Esophagus muscularis mucosa (tissue), 4 donors: ENCODE measurements at regions of chr2 and their contacts with region 1.

Region 1: GRCh38 chr2:127526149-127527000 is at the start of gene IWS1:
- DNase-seq: peak; percentile 99
- H3K4me3 ChIP-seq: peak within 1 kb of the TSS; percentile 81 to 97 (median 94)
- H3K27ac ChIP-seq: peak within 1 kb of the TSS; percentile 96 to 97 (median 96)
- H3K4me1 ChIP-seq: peaks cover 23 to 37% (median 28%) of the 10 kb centered on the region in 4 donors
- H3K27me3 ChIP-seq: no peaks in the 10 kb centered on the region
- CTCF ChIP-seq: peak in 2 of 3 experiments; percentile 34 to 48
- EP300 ChIP-seq: peak; percentile 73
- POLR2A ChIP-seq: peak; percentile 88
- total RNA-seq, gene IWS1: 32.6 to 38.1 (median 34.7) TPM

Region 2: GRCh38 chr2:127508631-127509034 is 17.7 kb before region 1 on chr2:
- intact Hi-C with region 1: loop called (anchors 2 kb)
- DNase-seq: no peak
- H3K4me3 ChIP-seq: no peak overlapping the region
- H3K27ac ChIP-seq: peak overlapping the region; percentile 24 to 80 (median 68)
- H3K4me1 ChIP-seq: peaks cover 49 to 73% (median 57%) of the 10 kb centered on the region in 4 donors
- H3K27me3 ChIP-seq: no peaks in the 10 kb centered on the region
- CTCF ChIP-seq: no peak
- EP300 ChIP-seq: no peak
- POLR2A ChIP-seq: no peak

Region 3: GRCh38 chr2:127637725-127638252 is 111.4 kb after region 1 on chr2:
- intact Hi-C with region 1: loop called (anchors 10 kb)
- DNase-seq: no peak
- H3K4me3 ChIP-seq: no peak overlapping the region
- H3K27ac ChIP-seq: peak overlapping the region; percentile 64 to 85 (median 82)
- H3K4me1 ChIP-seq: peaks cover 89 to 100% (median 97%) of the 10 kb centered on the region in 4 donors
- H3K27me3 ChIP-seq: no peaks in the 10 kb centered on the region
- CTCF ChIP-seq: no peak
- EP300 ChIP-seq: no peak
- POLR2A ChIP-seq: no peak